OCI-LY7 (cell line): ENCODE measurements at regions of chr3 and their contacts with region 1.

Region 1: GRCh38 chr3:151168269-151169094 is 34.5 kb downstream of the GPR171 start:
- DNase-seq: peak; percentile 68
- H3K4me3 ChIP-seq: no peak overlapping the region
- H3K27ac ChIP-seq: no peak overlapping the region
- H3K4me1 ChIP-seq: peaks cover 25% of the 10 kb centered on the region
- CTCF ChIP-seq: peak; percentile 92

Region 2: GRCh38 chr3:151282921-151283320 is 114.4 kb after region 1 on chr3:
- CTCF ChIA-PET with region 1: no interaction called
- POLR2A ChIA-PET with region 1: interaction called, 4 read pairs
- intact Hi-C with region 1: loop called (anchors 1 kb)
- DNase-seq: peak; percentile 60
- H3K4me3 ChIP-seq: no peak overlapping the region
- H3K27ac ChIP-seq: no peak overlapping the region
- H3K4me1 ChIP-seq: peaks cover 9% of the 10 kb centered on the region
- CTCF ChIP-seq: peak; percentile 88

Region 3: DNA sequence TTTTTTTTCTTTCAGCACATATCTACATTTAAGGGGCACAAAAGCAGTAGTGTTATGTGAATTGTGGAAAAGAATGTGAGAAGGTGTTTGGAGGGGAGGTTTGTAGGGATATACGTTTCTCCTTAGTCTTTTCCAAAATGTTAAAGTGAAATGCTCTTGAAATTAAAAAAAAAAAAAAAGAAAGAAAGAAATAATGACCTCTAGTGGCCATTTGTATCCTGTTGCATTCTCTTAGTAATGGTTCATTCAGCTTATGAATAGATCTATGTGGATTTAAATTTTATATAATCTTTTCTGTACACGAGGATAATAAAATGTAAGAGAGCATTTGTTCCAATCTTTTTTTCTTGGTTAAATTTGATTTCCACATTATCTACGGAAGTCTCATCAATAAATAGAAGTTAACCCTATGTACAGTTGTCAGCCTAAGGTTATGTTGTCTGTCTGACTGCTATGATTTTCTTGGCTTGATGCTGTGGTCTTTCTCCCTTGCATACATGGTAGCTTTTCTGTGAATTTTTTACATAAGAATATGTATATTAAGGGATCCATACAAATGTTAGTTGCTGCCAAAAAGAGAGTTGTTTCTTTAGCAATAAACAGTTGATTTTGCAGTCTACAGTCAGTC is 159.2 kb after region 1 on chr3:
- CTCF ChIA-PET with region 1: no interaction called
- POLR2A ChIA-PET with region 1: interaction called, 3 read pairs
- intact Hi-C with region 1: loop called (anchors 1 kb)
- DNase-seq: peak; percentile 35
- H3K4me3 ChIP-seq: no peak overlapping the region
- H3K27ac ChIP-seq: no peak overlapping the region
- H3K4me1 ChIP-seq: no peaks in the 10 kb centered on the region
- CTCF ChIP-seq: peak; percentile 89